ENCODE measurements at regions of chr10 and their contacts with region 1.

Region 1: GRCh38 chr10:122112625-122113160 is 123.7 kb downstream of the TACC2 start:
- DNase-seq: peak; percentile 85 to 87
- H3K4me3 ChIP-seq: peak overlapping the region; percentile 88
- H3K27ac ChIP-seq: peak overlapping the region; percentile 90
- H3K4me1 ChIP-seq: peaks cover 8% of the 10 kb centered on the region
- H3K27me3 ChIP-seq: no peaks in the 10 kb centered on the region
- CTCF ChIP-seq: no peak

Region 2: DNA sequence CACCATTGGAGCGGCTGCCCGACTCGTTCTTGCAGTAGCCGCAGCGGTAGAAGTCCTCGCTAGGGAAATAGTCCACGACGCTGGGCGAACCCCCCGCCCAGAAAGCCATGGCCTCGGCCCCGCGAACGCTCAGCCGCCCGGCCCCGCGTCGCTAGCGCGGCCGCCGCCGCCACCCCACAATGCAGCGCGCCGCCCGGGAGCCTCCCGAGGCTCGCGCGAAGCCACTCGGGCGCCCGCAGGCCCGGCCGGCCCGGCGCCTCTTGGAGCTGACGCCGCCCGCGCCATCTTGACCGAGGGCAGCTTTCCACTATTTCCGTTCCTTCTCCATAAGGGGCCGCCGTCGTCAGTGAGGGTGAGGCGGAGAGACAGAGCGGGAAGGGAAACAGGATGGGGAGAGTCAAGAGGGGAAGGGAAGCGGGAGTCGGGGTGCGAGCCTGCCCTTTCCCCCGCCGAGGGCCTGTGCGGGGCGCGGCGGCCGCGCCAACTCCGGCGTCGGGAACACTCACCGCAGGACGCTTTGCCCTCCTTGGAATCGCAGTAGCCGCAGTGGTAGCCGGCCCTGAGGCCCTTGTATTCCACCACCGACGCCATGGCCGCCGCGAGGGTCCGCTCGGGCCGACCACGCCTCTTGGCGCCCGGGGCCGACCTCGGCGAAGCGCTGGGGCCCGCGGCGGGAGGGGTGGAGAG is 184.7 kb before region 1 on chr10 and contains the start of gene ATE1:
- CTCF ChIA-PET with region 1: no interaction called
- POLR2A ChIA-PET with region 1: no interaction called
- intact Hi-C with region 1: loop called (anchors 5 kb)
- DNase-seq: peak; percentile 59 to 76
- H3K4me3 ChIP-seq: peak within 1 kb of the TSS; percentile 73
- H3K27ac ChIP-seq: peak within 1 kb of the TSS; percentile 82
- H3K4me1 ChIP-seq: 0 out of 2 replicates have a peak, but pooled peaks cover 5% of the 10 kb centered on the region
- H3K27me3 ChIP-seq: no peaks in the 10 kb centered on the region
- CTCF ChIP-seq: no peak
- total RNA-seq, gene ATE1: 12.2 and 14.8 TPM in 2 replicates

Region 3: GRCh38 chr10:121974535-121975294 is 138.0 kb before region 1 on chr10 and contains the start of gene NSMCE4A:
- CTCF ChIA-PET with region 1: no interaction called
- POLR2A ChIA-PET with region 1: no interaction called
- intact Hi-C with region 1: loop called (anchors 1 kb)
- DNase-seq: peak; percentile 44 to 63
- H3K4me3 ChIP-seq: peak within 1 kb of the TSS; percentile 83
- H3K27ac ChIP-seq: peak within 1 kb of the TSS; percentile 77
- H3K4me1 ChIP-seq: peaks cover 6% of the 10 kb centered on the region
- H3K27me3 ChIP-seq: no peaks in the 10 kb centered on the region
- CTCF ChIP-seq: no peak; the same call in 1 of the 2 replicates
- total RNA-seq, gene NSMCE4A: 26.8 and 32.4 TPM in 2 replicates

Region 4: GRCh38 chr10:122051251-122051996 is 61.3 kb before region 1 on chr10:
- CTCF ChIA-PET with region 1: interaction called, 3 read pairs
- POLR2A ChIA-PET with region 1: interaction called, 4 read pairs
- intact Hi-C with region 1: loop called (anchors 1 kb)
- DNase-seq: peak; percentile 68 to 80
- H3K4me3 ChIP-seq: no peak overlapping the region
- H3K27ac ChIP-seq: no peak overlapping the region
- H3K4me1 ChIP-seq: peaks cover 9% of the 10 kb centered on the region; the same call in 1 of the 2 replicates
- H3K27me3 ChIP-seq: no peaks in the 10 kb centered on the region
- CTCF ChIP-seq: peak; percentile 75

Region 5: GRCh38 chr10:122056431-122057094 is 56.1 kb before region 1 on chr10:
- CTCF ChIA-PET with region 1: interaction called, 4 read pairs
- POLR2A ChIA-PET with region 1: interaction called, 4 read pairs
- intact Hi-C with region 1: loop called (anchors 1 kb)
- DNase-seq: peak; percentile 53 to 85
- H3K4me3 ChIP-seq: no peak overlapping the region
- H3K27ac ChIP-seq: peak overlapping the region; percentile 36
- H3K4me1 ChIP-seq: peaks cover 26% of the 10 kb centered on the region
- H3K27me3 ChIP-seq: no peaks in the 10 kb centered on the region
- CTCF ChIP-seq: no peak

Region 6: GRCh38 chr10:122072491-122072890 is 40.2 kb before region 1 on chr10:
- CTCF ChIA-PET with region 1: no interaction called
- POLR2A ChIA-PET with region 1: no interaction called
- intact Hi-C with region 1: no loop called
- DNase-seq: no peak
- H3K4me3 ChIP-seq: no peak overlapping the region
- H3K27ac ChIP-seq: no peak overlapping the region
- H3K4me1 ChIP-seq: no peaks in the 10 kb centered on the region
- H3K27me3 ChIP-seq: no peaks in the 10 kb centered on the region
- CTCF ChIP-seq: no peak

Region 7: DNA sequence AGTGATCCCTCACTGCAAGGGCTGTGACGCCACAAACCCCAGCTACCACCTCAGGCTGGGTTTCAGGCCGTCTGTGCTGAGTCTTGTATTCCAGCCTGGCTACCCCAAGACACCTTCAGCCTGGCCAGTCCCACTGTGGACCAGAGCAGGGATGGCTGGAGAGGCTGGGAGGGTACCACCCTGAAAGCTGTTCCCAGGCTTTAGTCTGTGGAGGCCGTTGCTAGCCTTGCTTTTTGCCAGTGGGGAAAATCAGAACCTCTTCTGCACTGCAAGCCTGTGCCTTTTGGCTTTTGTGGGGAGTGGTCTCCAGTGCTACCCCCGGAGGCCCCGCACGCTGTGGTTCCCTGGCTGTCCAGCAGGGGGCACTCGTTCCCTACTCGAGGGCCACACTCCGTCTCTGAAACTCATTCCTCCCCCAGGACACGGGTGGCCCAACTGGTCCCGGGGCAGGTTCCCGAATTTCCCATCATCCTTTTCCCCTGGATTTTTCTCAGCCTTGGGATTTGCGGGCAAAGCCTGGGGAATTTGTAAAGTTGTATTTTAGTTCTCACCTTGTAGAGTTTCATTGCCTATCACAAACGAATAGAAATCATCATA is 30.0 kb after region 1 on chr10:
- CTCF ChIA-PET with region 1: no interaction called
- POLR2A ChIA-PET with region 1: no interaction called
- intact Hi-C with region 1: loop called (anchors 2 kb)
- DNase-seq: no peak
- H3K4me3 ChIP-seq: no peak overlapping the region
- H3K27ac ChIP-seq: no peak overlapping the region
- H3K4me1 ChIP-seq: peaks cover 25% of the 10 kb centered on the region
- H3K27me3 ChIP-seq: no peaks in the 10 kb centered on the region
- CTCF ChIP-seq: peak; percentile 80